H1 (cell line): ENCODE measurements at regions of chr17 and their contacts with region 1.

Region 1: DNA sequence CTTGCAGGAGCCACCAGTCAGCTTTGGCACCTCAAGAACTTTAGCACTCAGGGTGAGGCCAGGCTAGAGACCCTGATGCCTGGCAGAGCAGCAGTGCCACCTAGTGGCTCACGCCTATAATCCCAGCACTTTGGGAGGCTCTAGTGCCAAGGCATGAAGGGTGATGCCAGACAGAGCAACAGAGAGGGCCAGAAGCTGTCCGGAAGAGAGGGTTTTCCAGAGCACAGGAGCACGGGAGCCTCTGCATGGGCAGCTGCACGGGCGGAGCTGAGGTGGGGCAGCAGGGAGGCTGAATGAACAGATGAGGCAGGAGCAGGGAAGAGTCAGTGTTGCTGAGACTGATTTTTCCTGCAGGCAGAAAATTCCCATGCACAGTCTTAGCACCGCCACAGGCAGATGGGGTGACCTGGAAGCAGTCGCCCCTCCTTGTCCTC is 38.9 kb downstream of the MYH3 start:
- DNase-seq: peak; percentile 51 to 79
- H3K4me3 ChIP-seq: no peak overlapping the region
- H3K27ac ChIP-seq: no peak overlapping the region
- H3K4me1 ChIP-seq: no peaks in the 10 kb centered on the region; a peak in 2 of 7 replicates
- H3K27me3 ChIP-seq: no peaks in the 10 kb centered on the region
- CTCF ChIP-seq: peak; percentile 95 to 97 (median 95)
- EP300 ChIP-seq: no peak
- POLR2A ChIP-seq: no peak
- RAD21 ChIP-seq: peak; percentile 94 to 95

Region 2: DNA sequence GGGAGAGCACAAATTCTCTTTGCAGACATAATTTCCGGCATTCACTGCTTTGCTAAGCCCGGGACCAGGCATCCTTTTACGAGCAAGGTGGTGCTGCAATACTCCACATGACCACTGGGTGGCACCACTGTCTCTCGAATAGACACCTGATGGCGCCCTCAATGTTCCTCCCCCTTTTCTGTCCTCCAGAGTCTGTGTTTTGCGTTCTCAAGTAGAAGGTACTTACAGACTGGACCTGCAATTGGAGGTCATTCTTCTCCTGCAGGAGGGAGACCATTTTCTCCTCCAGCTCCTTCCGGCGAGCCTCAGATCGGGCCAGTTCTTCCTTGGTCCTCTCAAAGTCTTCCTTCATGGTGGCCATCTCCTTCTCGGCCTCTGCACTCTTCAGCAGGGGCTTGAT is 290.6 kb before region 1 on chr17:
- CTCF ChIA-PET with region 1: interaction called, 343 read pairs
- POLR2A ChIA-PET with region 1: interaction called, 3 read pairs
- DNase-seq: peak; percentile 73 to 97
- H3K4me3 ChIP-seq: no peak overlapping the region
- H3K27ac ChIP-seq: no peak overlapping the region
- H3K4me1 ChIP-seq: no peaks in the 10 kb centered on the region
- H3K27me3 ChIP-seq: no peaks in the 10 kb centered on the region
- CTCF ChIP-seq: peak; percentile 88 to 96 (median 96)
- EP300 ChIP-seq: no peak
- POLR2A ChIP-seq: no peak
- RAD21 ChIP-seq: peak; percentile 97 to 99

Region 3: GRCh38 chr17:10372906-10373305 is 245.3 kb before region 1 on chr17 and contains the start of gene MYH13:
- CTCF ChIA-PET with region 1: interaction called, 10 read pairs
- POLR2A ChIA-PET with region 1: no interaction called
- DNase-seq: no peak
- H3K4me3 ChIP-seq: no peak within 1 kb of the TSS
- H3K27ac ChIP-seq: no peak within 1 kb of the TSS
- H3K4me1 ChIP-seq: no peaks in the 10 kb centered on the region
- H3K27me3 ChIP-seq: no peaks in the 10 kb centered on the region
- CTCF ChIP-seq: no peak
- EP300 ChIP-seq: no peak
- POLR2A ChIP-seq: no peak
- RAD21 ChIP-seq: no peak
- total RNA-seq, gene MYH13: not detected in 2 replicates

Region 4: DNA sequence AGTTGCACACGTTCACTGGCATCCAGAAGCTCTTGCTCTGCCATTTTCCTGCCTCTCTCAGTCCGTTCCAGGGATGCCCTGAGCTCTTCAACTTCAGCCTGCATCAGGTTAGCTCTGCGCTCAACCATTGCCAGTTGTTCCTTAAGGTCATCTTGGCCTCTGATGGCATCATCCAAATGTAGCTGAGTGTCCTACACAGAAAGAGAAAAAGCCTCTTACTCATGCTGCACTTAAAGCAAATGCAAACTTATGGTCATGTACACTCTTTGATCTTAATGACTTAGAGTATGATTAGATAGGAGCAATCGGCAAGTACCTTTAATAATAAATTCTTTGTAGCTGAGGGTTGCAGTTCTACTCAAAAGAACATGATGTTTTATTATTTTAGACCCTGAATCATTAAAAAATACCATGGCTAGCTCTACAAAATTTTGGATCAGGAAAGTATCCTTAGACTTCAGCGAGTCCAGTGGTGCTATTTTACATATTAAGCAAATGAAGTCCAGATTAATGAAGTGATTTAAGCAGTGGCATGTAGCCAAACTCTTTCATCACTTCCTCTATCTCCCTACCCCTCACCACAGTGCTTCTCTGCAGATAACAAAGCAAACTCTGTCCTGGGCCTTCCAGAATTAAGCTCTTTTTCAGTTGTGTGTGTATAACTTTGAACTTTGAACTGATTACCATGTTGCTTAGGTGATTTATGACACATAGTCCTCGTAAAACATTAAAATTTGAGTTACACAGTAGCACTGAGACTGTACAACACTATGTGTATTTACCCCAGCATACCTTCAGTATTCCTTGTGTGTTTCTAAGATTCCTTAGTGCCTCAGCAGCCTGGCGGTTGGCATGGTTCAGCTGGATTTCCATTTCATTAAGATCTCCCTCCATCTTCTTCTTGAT is 170.9 kb before region 1 on chr17:
- CTCF ChIA-PET with region 1: interaction called, 37 read pairs
- POLR2A ChIA-PET with region 1: no interaction called
- DNase-seq: no peak
- H3K4me3 ChIP-seq: no peak overlapping the region
- H3K27ac ChIP-seq: no peak overlapping the region
- H3K4me1 ChIP-seq: no peaks in the 10 kb centered on the region
- H3K27me3 ChIP-seq: no peaks in the 10 kb centered on the region
- CTCF ChIP-seq: no peak
- EP300 ChIP-seq: no peak
- POLR2A ChIP-seq: no peak
- RAD21 ChIP-seq: no peak

Region 5: DNA sequence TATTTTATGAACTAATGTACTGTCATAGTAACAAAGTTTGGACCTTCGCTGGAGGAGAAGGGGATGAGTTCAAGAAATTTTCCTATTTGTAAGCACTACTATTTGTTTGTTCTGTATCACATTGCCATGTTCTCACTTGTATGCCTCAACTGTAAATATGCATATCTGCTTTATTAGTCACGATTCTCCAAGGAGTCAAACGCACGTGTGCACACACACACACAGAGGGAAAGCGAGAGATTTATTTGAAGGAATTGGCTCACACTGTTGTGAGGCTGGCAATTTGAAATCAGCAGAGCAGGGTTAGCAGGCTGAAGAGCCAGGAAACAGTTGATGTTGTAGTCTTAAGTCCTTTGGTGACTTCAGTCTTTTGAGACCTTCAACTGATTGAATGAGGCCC is 43.9 kb before region 1 on chr17:
- CTCF ChIA-PET with region 1: interaction called, 18 read pairs
- POLR2A ChIA-PET with region 1: no interaction called
- DNase-seq: no peak
- H3K4me3 ChIP-seq: no peak overlapping the region
- H3K27ac ChIP-seq: no peak overlapping the region
- H3K4me1 ChIP-seq: peaks cover 2 to 15% (median 5%) of the 10 kb centered on the region in 4 experiments; a peak in 5 of 7 replicates
- H3K27me3 ChIP-seq: no peaks in the 10 kb centered on the region
- CTCF ChIP-seq: no peak
- EP300 ChIP-seq: no peak
- POLR2A ChIP-seq: no peak
- RAD21 ChIP-seq: no peak

Region 6: GRCh38 chr17:10646392-10646990 is 28.3 kb after region 1 on chr17:
- CTCF ChIA-PET with region 1: interaction called, 323 read pairs
- POLR2A ChIA-PET with region 1: no interaction called
- DNase-seq: peak in 1 of 2 experiments; percentile 87
- H3K4me3 ChIP-seq: no peak overlapping the region
- H3K27ac ChIP-seq: no peak overlapping the region
- H3K4me1 ChIP-seq: no peaks in the 10 kb centered on the region
- H3K27me3 ChIP-seq: no peaks in the 10 kb centered on the region
- CTCF ChIP-seq: peak; percentile 72 to 86 (median 81)
- EP300 ChIP-seq: no peak
- POLR2A ChIP-seq: no peak
- RAD21 ChIP-seq: peak; percentile 76 to 83